ENCODE measurements at regions of chr10 and their contacts with region 1.

Region 1: DNA sequence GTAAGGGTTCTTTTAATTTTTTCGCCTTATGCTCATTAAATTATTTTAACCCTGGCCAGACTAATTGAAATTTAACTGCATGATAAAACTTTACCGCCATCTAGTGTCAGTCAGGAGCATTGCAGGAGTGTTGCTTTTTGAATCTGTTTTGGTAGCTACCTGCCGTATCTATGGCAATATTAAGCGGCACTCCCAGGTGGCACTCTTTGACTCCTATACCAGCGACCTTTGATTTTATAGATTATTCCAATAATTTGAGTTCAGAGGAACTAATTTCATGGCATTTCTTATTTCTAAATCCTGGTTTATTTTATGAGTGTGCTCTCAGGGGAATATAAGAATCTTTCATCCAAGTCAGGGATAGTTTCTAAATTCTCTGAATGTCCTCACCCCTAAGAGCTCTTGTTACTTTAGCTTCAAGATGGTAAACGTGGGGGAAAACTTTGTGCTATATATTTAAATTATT is 198.9 kb downstream of the REEP3 start:
- DNase-seq: peak in 1 of 2 donors; percentile 39
- ATAC-seq: peak in 6 of 8 donors; percentile 22 to 53 (median 35)
- H3K4me3 ChIP-seq: no peak overlapping the region
- H3K27ac ChIP-seq: peak overlapping the region in 5 of 10 donors; percentile 33 to 66 (median 41)
- H3K4me1 ChIP-seq: peaks cover 0 to 39% (median 18%) of the 10 kb centered on the region in 9 donors
- H3K27me3 ChIP-seq: no peaks in the 10 kb centered on the region
- CTCF ChIP-seq: peak; percentile 95 to 99 (median 98)

Region 2: GRCh38 chr10:61786728-61787127 is 1933.4 kb before region 1 on chr10:
- intact Hi-C with region 1: loop called in 1 of 10 experiments (anchors 5 kb)
- DNase-seq: no peak
- ATAC-seq: no peak
- H3K4me3 ChIP-seq: no peak overlapping the region
- H3K27ac ChIP-seq: no peak overlapping the region
- H3K4me1 ChIP-seq: peaks cover 0 to 15% (median 0%) of the 10 kb centered on the region in 9 donors
- H3K27me3 ChIP-seq: no peaks in the 10 kb centered on the region
- CTCF ChIP-seq: no peak

Region 3: DNA sequence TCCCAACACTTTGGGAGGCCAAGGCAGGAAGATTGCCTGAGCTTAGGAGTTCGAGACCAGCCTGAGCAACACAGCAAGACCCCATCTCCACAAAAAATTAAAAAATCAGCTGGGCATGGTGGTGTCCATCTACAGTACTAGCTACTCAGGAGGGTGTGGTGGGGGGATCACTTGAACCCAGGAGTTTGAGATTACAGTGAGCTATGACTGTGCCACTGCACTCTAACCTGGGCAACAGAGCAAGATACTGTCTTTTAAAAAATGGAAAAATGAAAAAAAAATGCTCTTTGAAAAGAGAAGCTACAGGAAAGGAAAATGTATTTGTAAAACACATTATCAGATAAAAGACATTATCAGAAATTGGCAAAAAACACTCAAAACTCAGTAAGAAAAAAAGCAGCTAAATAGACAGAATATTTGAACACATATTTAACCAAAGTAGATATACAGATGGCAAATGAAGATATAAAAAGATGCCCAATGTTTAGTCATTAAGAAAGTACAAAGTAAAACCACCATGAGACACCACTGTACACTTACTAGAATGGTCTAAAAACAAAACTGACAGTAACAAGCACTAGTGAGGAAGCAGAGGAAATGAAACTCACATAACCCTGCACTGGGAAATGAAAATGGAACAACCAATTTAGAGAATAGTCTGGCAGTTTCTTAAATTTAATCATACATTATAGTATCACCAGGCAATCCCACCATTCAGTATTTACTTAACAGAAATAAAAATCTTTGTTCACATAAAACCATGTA is 546.5 kb before region 1 on chr10:
- intact Hi-C with region 1: loop called in 5 of 10 experiments (anchors 5 kb)
- DNase-seq: no peak
- ATAC-seq: peak in 4 of 8 donors; percentile 39 to 62 (median 49)
- H3K4me3 ChIP-seq: no peak overlapping the region
- H3K27ac ChIP-seq: peak overlapping the region in 2 of 10 donors; percentile 39 to 62
- H3K4me1 ChIP-seq: peaks cover 0 to 34% (median 18%) of the 10 kb centered on the region in 9 donors
- H3K27me3 ChIP-seq: no peaks in the 10 kb centered on the region
- CTCF ChIP-seq: no peak

Region 4: DNA sequence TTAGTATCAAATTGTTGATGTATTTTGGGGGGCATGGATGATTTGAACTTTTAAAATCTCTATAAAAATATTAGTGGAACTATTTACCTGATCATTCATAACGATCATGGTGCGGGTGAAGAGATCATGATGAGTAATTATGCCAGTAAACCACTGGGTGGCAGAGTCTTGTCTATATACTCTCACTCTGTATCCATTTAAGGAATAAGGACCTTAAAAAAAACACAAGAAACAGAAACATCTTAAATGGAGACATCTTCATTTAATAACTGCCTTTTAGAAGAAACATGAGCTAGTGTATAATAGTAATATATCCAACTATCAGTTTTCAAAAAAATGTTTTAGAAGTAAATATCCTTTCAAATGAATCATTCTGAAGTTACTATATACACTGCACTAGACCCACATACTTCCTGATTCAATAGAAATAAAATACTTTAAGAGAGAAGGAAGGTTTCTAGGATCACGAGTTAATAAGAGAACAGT is 502.9 kb before region 1 on chr10:
- intact Hi-C with region 1: loop called in 3 of 10 experiments (anchors 5 kb)
- DNase-seq: peak in 1 of 2 donors; percentile 30
- ATAC-seq: peak; percentile 62 to 82 (median 77)
- H3K4me3 ChIP-seq: no peak overlapping the region
- H3K27ac ChIP-seq: peak overlapping the region in 4 of 10 donors; percentile 1 to 40 (median 14)
- H3K4me1 ChIP-seq: peaks cover 0 to 63% (median 43%) of the 10 kb centered on the region in 9 donors
- H3K27me3 ChIP-seq: no peaks in the 10 kb centered on the region
- CTCF ChIP-seq: peak; percentile 46 to 86 (median 70)

Region 5: DNA sequence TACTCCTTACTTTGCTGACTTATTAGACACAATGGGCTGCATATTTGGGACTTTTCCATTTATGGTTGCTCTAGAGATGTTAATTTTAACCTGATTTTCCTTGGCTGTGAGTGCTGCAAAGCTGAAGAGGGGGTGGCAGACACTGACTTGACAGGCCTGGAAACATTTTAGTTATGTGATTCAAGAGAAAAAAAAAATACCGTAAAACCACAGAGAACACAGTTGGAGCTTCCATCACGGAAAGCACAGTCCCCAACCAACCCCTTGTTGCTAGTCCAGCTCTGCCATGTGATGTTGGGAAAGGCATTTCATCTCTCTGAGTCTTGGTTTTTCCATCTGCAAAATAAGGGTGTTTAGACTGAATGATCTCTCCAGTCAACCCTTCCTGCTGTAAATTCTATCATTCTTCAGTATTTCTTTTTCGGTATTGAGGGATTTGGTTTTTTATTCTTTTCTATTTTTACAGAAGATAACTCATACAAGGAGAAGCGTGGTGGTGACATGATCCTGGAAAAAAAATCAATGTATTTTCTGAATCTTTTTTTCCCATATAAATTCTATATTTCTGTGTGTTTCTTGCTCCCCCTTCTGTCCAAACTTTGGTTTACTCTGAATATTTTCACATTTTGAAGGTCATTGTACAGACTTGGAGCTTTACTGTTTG is 47.2 kb after region 1 on chr10:
- intact Hi-C with region 1: loop called in 2 of 10 experiments (anchors 5 kb)
- DNase-seq: no peak
- ATAC-seq: peak in 5 of 8 donors; percentile 34 to 67 (median 57)
- H3K4me3 ChIP-seq: no peak overlapping the region
- H3K27ac ChIP-seq: peak overlapping the region in 8 of 10 donors; percentile 18 to 65 (median 42)
- H3K4me1 ChIP-seq: peaks cover 0 to 23% (median 6%) of the 10 kb centered on the region in 9 donors
- H3K27me3 ChIP-seq: no peaks in the 10 kb centered on the region
- CTCF ChIP-seq: peak in 8 of 9 donors; percentile 27 to 64 (median 48)

Measured in heart right ventricle (tissue), 16 donors.